ENCODE measurements at regions of chr9 and their contacts with region 1.

Region 1: GRCh38 chr9:128412120-128412790 is 8.4 kb upstream of the CERCAM start:
- DNase-seq: peak in 2 of 3 donors; percentile 21 to 30
- H3K4me3 ChIP-seq: no peak overlapping the region
- H3K4me3 Mint-ChIP-seq: no peak overlapping the region
- H3K27ac ChIP-seq: no peak overlapping the region
- H3K27ac Mint-ChIP-seq: no peak overlapping the region
- H3K4me1 ChIP-seq: no peaks in the 10 kb centered on the region
- H3K4me1 Mint-ChIP-seq: peaks cover 8% of the 10 kb centered on the region
- H3K27me3 ChIP-seq: peaks cover 5 to 34% of the 10 kb centered on the region in 2 donors
- H3K27me3 Mint-ChIP-seq: peaks cover 38 to 67% (median 42%) of the 10 kb centered on the region in 3 donors
- CTCF ChIP-seq: peak; percentile 70

Region 2: GRCh38 chr9:128296337-128297220 is 115.7 kb before region 1 on chr9:
- intact Hi-C with region 1: loop called in 1 of 2 experiments (anchors 10 kb)
- DNase-seq: no peak
- H3K4me3 ChIP-seq: no peak overlapping the region
- H3K4me3 Mint-ChIP-seq: no peak overlapping the region
- H3K27ac ChIP-seq: no peak overlapping the region
- H3K27ac Mint-ChIP-seq: peak overlapping the region in 1 of 7 donors; percentile 50
- H3K4me1 ChIP-seq: no peaks in the 10 kb centered on the region
- H3K4me1 Mint-ChIP-seq: no peaks in the 10 kb centered on the region
- H3K27me3 ChIP-seq: no peaks in the 10 kb centered on the region
- H3K27me3 Mint-ChIP-seq: peaks cover 0 to 2% (median 0%) of the 10 kb centered on the region in 3 donors
- CTCF ChIP-seq: no peak

Region 3: GRCh38 chr9:128361986-128362646 is 50.1 kb before region 1 on chr9:
- intact Hi-C with region 1: loop called (anchors 2 to 5 kb)
- DNase-seq: peak; percentile 59 to 74 (median 69)
- H3K4me3 ChIP-seq: peak overlapping the region; percentile 22 to 82 (median 57)
- H3K4me3 Mint-ChIP-seq: peak overlapping the region; percentile 89 to 97
- H3K27ac ChIP-seq: peak overlapping the region in 1 of 2 donors; percentile 17
- H3K27ac Mint-ChIP-seq: peak overlapping the region in 2 of 7 donors; percentile 11 to 58
- H3K4me1 ChIP-seq: peaks cover 21 to 25% of the 10 kb centered on the region in 2 donors
- H3K4me1 Mint-ChIP-seq: peaks cover 21% of the 10 kb centered on the region
- H3K27me3 ChIP-seq: no peaks in the 10 kb centered on the region
- H3K27me3 Mint-ChIP-seq: peaks cover 0 to 9% (median 5%) of the 10 kb centered on the region in 3 donors
- CTCF ChIP-seq: peak; percentile 96

Region 4: GRCh38 chr9:128428644-128429512 is 16.6 kb after region 1 on chr9:
- intact Hi-C with region 1: no loop called
- DNase-seq: no peak
- H3K4me3 ChIP-seq: no peak overlapping the region
- H3K4me3 Mint-ChIP-seq: no peak overlapping the region
- H3K27ac ChIP-seq: no peak overlapping the region
- H3K27ac Mint-ChIP-seq: peak overlapping the region in 1 of 7 donors; percentile 36
- H3K4me1 ChIP-seq: no peaks in the 10 kb centered on the region
- H3K4me1 Mint-ChIP-seq: no peaks in the 10 kb centered on the region
- H3K27me3 ChIP-seq: no peaks in the 10 kb centered on the region
- H3K27me3 Mint-ChIP-seq: peaks cover 0 to 3% (median 1%) of the 10 kb centered on the region in 3 donors
- CTCF ChIP-seq: no peak

Measured in CD14-positive monocyte (primary cell).